PC-3 (cell line): ENCODE measurements at regions of chr1 and their contacts with region 1.

Region 1: DNA sequence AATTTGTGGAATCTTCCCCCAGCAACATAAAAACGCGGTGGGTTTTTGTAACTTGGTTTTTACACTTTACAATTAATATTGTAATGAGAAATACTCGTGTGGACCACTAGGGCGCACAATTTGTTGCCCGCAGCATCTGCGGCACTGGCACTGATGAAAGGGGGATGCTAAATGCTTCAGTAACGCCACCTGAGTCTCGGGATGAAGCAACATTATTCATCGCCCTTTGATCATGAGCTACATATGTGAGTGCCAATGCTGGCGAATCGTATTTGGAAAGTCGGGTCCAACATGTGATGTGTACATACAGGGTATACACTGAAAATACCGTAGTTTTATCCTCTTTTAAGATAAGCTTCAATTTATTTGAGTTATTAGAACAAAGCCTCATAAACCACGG is 34.2 kb upstream of the COX20 start:
- DNase-seq: peak; percentile 83
- ATAC-seq: peak; percentile 78
- H3K4me3 ChIP-seq: peak overlapping the region; percentile 27; the same call in 1 of the 2 replicates
- H3K27ac ChIP-seq: no peak overlapping the region
- H3K4me1 ChIP-seq: peaks cover 7% of the 10 kb centered on the region; the same call in 1 of the 2 replicates
- H3K27me3 ChIP-seq: no peaks in the 10 kb centered on the region
- CTCF ChIP-seq: peak; percentile 92

Region 2: DNA sequence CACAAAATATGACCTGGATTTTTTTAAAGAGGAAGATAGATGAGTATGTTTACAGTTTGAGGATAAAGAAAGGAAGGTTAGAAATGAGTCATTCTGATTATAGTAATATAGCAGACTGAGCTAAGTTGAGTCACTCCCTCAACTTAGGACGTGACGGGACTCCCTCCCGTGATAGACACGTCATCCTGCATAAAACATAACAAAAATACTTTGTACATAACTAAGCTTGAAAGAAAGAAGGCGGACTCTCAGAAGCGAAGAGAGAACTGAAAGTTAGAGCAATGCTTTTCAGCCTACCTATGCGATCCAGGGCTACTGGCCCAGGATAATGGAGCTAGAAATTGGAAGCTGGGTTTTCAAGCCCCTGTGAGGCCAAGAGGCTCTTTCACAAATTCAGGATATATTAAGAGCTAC is 201.3 kb before region 1 on chr1:
- CTCF ChIA-PET with region 1: interaction called, 22 read pairs
- POLR2A ChIA-PET with region 1: no interaction called
- intact Hi-C with region 1: loop called (anchors 1 kb)
- DNase-seq: peak; percentile 98
- ATAC-seq: peak; percentile 95
- H3K4me3 ChIP-seq: peak overlapping the region; percentile 65
- H3K27ac ChIP-seq: peak overlapping the region; percentile 55
- H3K4me1 ChIP-seq: peaks cover 13% of the 10 kb centered on the region
- H3K27me3 ChIP-seq: no peaks in the 10 kb centered on the region
- CTCF ChIP-seq: no peak

Region 3: DNA sequence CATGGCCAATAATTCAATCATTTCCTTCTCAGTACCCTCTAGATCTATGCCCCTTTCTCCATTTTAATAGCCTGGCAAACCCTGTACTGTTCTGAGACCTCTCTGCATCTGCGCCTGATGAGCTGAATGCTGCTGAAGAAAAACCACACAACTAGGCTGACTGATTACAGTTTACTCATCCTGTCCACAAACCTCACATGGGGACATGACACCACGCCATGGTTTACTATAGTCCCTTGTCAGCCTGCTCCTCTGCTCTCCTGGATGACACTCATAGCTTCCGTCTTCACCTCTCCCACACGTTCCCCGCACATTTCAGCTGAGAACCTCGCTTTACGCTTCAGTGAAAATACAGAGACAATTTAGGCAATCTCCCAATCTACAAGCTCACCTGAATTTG is 88.6 kb before region 1 on chr1:
- CTCF ChIA-PET with region 1: no interaction called
- POLR2A ChIA-PET with region 1: no interaction called
- intact Hi-C with region 1: loop called (anchors 5 kb)
- DNase-seq: no peak
- ATAC-seq: peak; percentile 58
- H3K4me3 ChIP-seq: no peak overlapping the region
- H3K27ac ChIP-seq: no peak overlapping the region
- H3K4me1 ChIP-seq: 0 out of 2 replicates have a peak, but pooled peaks cover 4% of the 10 kb centered on the region
- H3K27me3 ChIP-seq: no peaks in the 10 kb centered on the region
- CTCF ChIP-seq: no peak

Region 4: DNA sequence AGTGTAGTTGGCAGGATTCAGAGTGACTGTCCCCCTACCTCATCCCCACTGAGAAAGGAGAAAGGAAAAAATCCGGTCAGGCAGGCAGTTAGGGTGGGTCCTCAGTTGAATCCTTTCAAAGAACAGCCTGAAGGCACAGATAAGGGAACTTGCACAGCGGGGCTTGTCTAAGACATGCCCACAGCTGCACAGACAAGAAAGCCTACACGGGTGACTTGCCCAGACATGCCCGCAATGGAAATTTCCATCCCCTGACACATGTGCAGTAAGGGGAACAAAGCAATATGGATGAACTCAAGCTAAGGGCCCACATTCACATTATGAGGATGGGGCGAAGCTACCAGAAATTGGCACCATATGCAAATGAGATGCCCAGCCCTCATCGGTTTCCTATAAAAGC is 65.8 kb before region 1 on chr1:
- CTCF ChIA-PET with region 1: interaction called, 3 read pairs
- POLR2A ChIA-PET with region 1: no interaction called
- intact Hi-C with region 1: loop called (anchors 1 kb)
- DNase-seq: no peak
- ATAC-seq: no peak
- H3K4me3 ChIP-seq: no peak overlapping the region
- H3K27ac ChIP-seq: peak overlapping the region; percentile 81
- H3K4me1 ChIP-seq: peaks cover 29% of the 10 kb centered on the region
- H3K27me3 ChIP-seq: no peaks in the 10 kb centered on the region
- CTCF ChIP-seq: no peak

Region 5: DNA sequence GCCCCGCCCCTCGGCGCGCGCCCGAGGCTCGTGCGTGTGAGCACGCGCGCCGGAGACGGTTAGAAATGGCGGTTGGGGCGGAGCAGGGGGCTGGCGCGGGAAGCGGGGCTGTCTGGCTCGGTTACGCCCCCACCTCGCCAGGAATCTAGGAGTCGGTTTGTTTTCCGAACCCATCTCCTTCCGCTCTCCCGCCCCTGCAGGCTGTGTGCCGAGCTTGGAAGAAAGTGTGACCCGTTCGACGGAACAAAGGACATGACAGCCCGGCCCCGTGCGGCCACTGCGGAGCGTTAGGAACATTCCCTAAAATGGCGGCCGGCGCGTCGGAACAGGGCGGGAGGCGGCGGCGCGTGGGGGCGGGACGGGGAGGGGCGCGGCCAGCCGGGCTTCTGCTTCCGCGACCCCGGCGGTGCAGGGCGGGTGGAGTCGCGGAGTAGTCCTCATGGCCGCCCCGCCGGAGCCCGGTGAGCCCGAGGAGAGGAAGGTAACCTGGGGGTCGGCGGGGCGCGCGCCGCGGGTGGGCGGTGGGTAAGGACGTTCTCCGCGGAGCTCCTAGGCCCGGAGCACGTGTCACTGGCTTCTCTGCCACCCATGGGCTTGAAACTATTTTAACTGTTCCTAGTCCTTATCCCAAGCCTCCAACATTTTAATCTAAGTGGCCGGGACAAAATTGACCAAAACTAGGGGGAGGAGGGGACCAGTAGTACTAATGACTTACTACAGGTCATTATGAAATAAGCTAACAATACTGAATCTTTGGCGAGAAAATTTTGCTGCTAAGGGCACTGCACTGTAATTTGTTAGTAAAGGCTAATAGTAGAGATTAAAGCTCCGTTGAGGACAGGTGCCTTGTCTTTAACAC is 34.3 kb after region 1 on chr1 and contains the start of gene COX20:
- CTCF ChIA-PET with region 1: interaction called, 5 read pairs
- POLR2A ChIA-PET with region 1: interaction called, 3 read pairs
- intact Hi-C with region 1: loop called (anchors 1 kb)
- DNase-seq: peak; percentile 95
- ATAC-seq: peak; percentile 59
- H3K4me3 ChIP-seq: peak within 1 kb of the TSS; percentile 94
- H3K27ac ChIP-seq: peak within 1 kb of the TSS; percentile 91
- H3K4me1 ChIP-seq: peaks cover 47% of the 10 kb centered on the region
- H3K27me3 ChIP-seq: no peaks in the 10 kb centered on the region
- CTCF ChIP-seq: no peak
- total RNA-seq, gene COX20: 50.0 and 55.8 TPM in 2 replicates

Region 6: GRCh38 chr1:245045087-245045881 is 244.0 kb after region 1 on chr1:
- CTCF ChIA-PET with region 1: interaction called, 14 read pairs
- POLR2A ChIA-PET with region 1: interaction called, 3 read pairs
- intact Hi-C with region 1: loop called (anchors 1 kb)
- DNase-seq: peak; percentile 53
- ATAC-seq: peak; percentile 75
- H3K4me3 ChIP-seq: no peak overlapping the region
- H3K27ac ChIP-seq: no peak overlapping the region
- H3K4me1 ChIP-seq: no peaks in the 10 kb centered on the region
- H3K27me3 ChIP-seq: no peaks in the 10 kb centered on the region
- CTCF ChIP-seq: no peak